ENCODE measurements at regions of chr11 and their contacts with region 1.

Region 1: DNA sequence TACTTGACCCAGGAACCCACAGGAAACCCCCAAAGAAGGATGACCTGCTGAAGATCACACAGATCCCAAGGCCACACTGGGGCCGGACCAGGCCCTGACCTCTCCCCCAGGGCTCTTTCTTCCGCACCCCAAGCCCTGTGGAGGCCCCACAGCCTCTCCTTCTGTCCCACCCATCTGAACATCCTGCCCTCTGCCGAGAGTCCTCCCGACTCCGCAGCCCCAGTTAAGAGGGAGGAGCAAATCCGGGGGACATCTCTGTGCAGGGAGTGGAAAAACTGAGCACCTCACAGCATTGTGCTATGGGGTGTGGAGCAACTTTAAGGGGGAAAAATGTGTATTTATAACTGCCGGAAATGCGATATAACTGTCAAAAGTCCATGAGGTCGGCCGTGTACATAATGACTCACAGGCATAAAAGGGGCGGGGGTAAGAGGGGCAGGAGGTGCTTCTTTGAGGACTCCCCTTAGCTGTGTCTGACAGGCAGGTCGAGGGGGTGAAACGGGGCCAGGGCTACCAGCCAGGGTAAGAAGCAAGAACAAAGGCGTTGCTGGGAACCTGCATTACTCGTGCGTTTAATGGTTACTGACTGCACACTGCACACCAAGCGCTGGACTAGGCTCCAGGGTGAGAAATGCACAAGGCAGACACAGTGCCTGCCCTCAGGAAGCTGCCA is 57.2 kb downstream of the WNT11 start:
- DNase-seq: no peak
- CTCF ChIP-seq: no peak

Region 2: DNA sequence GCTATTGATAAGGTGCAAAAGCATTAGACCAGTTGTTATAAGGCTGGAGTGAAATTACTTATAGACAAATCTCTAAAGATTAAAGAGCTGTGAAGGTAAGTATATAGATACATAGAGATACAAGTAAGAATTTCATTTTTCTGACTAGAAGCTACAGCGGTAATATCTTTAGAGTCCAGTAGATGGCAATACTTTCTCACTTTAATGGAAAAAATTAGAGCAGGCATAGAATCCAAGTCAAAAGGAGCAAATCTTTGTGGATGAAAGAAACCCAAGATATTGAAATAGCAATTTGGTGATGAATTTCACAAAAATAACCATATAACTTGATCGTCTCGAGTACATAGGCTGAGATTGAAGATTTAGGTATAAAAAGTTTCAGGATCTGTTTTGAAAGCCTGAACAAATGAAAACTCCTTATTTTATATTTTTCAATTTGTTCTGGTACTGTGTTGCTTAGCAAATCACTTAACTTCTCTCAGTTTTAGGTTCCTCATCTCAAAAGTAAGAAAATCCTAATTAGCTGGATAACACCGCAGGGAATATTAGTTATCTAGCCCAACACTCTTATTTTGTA is 252.1 kb before region 1 on chr11:
- in situ Hi-C with region 1: loop called (anchors 5 kb)
- DNase-seq: no peak
- CTCF ChIP-seq: peak; percentile 55

Measured in GM13977 (cell line).